Transverse colon (tissue), 4 donors: ENCODE measurements at regions of chr5 and their contacts with region 1.

Region 1: GRCh38 chr5:153147891-153148623 is 342.4 kb upstream of the GRIA1 start:
- DNase-seq: no peak
- H3K4me3 ChIP-seq: no peak overlapping the region
- H3K27ac ChIP-seq: no peak overlapping the region
- H3K4me1 ChIP-seq: no peaks in the 10 kb centered on the region
- H3K27me3 ChIP-seq: no peaks in the 10 kb centered on the region
- CTCF ChIP-seq: peak; percentile 24 to 38 (median 27)
- EP300 ChIP-seq: no peak
- POLR2A ChIP-seq: no peak

Region 2: GRCh38 chr5:152560512-152561137 is 587.4 kb before region 1 on chr5:
- in situ Hi-C with region 1: loop called (anchors 10 to 25 kb)
- intact Hi-C with region 1: no loop called
- DNase-seq: peak; percentile 46
- H3K4me3 ChIP-seq: no peak overlapping the region
- H3K27ac ChIP-seq: no peak overlapping the region
- H3K4me1 ChIP-seq: no peaks in the 10 kb centered on the region
- H3K27me3 ChIP-seq: no peaks in the 10 kb centered on the region
- CTCF ChIP-seq: peak; percentile 52 to 62 (median 58)
- EP300 ChIP-seq: no peak
- POLR2A ChIP-seq: no peak

Region 3: DNA sequence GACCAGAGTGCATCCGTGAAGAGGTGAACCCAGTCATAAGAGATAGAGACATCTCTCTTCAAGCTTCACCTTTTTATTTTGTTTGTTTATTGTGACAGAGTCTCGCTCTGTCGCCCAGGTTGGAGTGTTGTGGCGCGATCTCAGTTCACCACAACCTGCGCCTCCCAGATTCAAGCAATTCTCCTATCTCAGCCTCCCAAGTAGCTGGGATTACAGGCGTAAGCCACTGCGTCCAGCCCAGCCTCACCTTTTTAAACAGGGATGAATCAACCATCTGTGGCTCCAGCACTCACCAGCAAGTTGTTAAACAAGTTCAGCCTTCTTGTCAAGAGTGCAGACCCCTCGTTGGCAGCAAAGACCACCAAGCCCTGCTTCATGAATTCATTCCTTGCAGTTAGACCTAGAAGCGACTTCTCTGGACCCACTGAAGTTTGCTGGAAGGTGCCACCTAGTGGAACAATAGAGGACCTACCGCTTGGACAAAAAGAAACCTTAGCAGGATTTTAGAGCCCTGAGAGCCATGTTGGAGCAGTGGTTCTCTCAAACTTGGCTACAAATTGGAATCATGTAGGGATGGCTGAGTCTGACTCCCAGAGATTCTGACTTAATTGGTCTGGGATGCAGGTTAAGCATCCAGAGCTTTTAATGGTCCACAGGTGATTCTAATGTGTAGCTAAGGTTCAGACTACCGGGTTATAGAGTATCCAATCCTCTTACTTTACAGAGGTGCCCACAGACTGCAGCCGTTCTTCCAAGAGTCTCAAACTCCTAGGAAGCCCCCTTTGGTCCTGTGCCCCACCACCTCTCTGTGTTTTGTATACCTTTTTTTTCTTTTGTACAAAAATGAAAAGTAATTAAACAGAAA is 1032.0 kb after region 1 on chr5:
- in situ Hi-C with region 1: no loop called
- intact Hi-C with region 1: no loop called
- DNase-seq: no peak
- H3K4me3 ChIP-seq: no peak overlapping the region
- H3K27ac ChIP-seq: peak overlapping the region in 2 of 4 donors; percentile 30 to 62
- H3K4me1 ChIP-seq: peaks cover 0 to 14% (median 3%) of the 10 kb centered on the region in 4 donors
- H3K27me3 ChIP-seq: no peaks in the 10 kb centered on the region
- CTCF ChIP-seq: peak; percentile 68 to 79 (median 75)
- EP300 ChIP-seq: no peak
- POLR2A ChIP-seq: no peak